B cell (primary cell): ENCODE measurements at regions of chr2 and their contacts with region 1.

Region 1: DNA sequence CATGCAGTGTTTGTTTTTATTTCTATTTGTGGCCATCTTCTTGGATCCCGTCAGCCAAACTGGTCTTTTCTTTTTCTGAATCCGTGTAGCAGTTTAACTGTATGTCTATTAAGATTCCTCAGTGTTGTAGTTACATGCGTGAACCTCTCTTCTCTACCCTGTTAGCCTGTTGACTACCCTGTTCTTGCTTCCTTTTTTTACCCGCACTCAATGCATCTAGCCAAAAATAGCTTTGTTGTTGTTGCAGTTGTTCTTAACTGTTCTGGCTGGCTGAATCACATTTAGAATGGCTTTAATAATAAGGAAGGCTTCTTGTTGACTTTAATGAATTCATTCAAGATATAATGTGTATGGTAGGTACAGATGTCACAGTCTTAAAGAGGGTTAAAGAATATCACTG is 137.1 kb downstream of the LCLAT1 start:
- DNase-seq: peak; percentile 59
- ATAC-seq: peak; percentile 81
- H3K4me3 ChIP-seq: peak overlapping the region in 3 of 5 experiments; percentile 5 to 52 (median 13)
- H3K4me3 Mint-ChIP-seq: peak overlapping the region; percentile 84
- H3K27ac ChIP-seq: peak overlapping the region; percentile 74 to 80
- H3K27ac Mint-ChIP-seq: peak overlapping the region; percentile 97
- H3K4me1 ChIP-seq: peaks cover 67 to 81% of the 10 kb centered on the region in 2 donors
- H3K4me1 Mint-ChIP-seq: peaks cover 78% of the 10 kb centered on the region
- H3K27me3 ChIP-seq: no peaks in the 10 kb centered on the region
- H3K27me3 Mint-ChIP-seq: no peaks in the 10 kb centered on the region
- CTCF ChIP-seq: no peak

Region 2: GRCh38 chr2:30503007-30503694 is 81.0 kb before region 1 on chr2:
- CTCF ChIA-PET with region 1: interaction called, 5 read pairs
- POLR2A ChIA-PET with region 1: no interaction called
- intact Hi-C with region 1: loop called (anchors 10 kb)
- DNase-seq: no peak
- ATAC-seq: peak; percentile 60
- H3K4me3 ChIP-seq: peak overlapping the region in 1 of 5 experiments; percentile 34
- H3K4me3 Mint-ChIP-seq: peak overlapping the region; percentile 73
- H3K27ac ChIP-seq: peak overlapping the region; percentile 48 to 76
- H3K27ac Mint-ChIP-seq: peak overlapping the region; percentile 93
- H3K4me1 ChIP-seq: peaks cover 28 to 37% of the 10 kb centered on the region in 2 donors
- H3K4me1 Mint-ChIP-seq: peaks cover 48% of the 10 kb centered on the region
- H3K27me3 ChIP-seq: no peaks in the 10 kb centered on the region
- H3K27me3 Mint-ChIP-seq: no peaks in the 10 kb centered on the region
- CTCF ChIP-seq: peak; percentile 46

Region 3: GRCh38 chr2:30629866-30630265 is 45.8 kb after region 1 on chr2:
- CTCF ChIA-PET with region 1: no interaction called
- POLR2A ChIA-PET with region 1: no interaction called
- intact Hi-C with region 1: loop called (anchors 5 kb)
- DNase-seq: no peak
- ATAC-seq: no peak
- H3K4me3 ChIP-seq: no peak overlapping the region
- H3K4me3 Mint-ChIP-seq: no peak overlapping the region
- H3K27ac ChIP-seq: no peak overlapping the region
- H3K27ac Mint-ChIP-seq: no peak overlapping the region
- H3K4me1 ChIP-seq: peaks cover 10 to 21% of the 10 kb centered on the region in 2 donors
- H3K4me1 Mint-ChIP-seq: peaks cover 32% of the 10 kb centered on the region
- H3K27me3 ChIP-seq: no peaks in the 10 kb centered on the region
- H3K27me3 Mint-ChIP-seq: no peaks in the 10 kb centered on the region
- CTCF ChIP-seq: no peak